ENCODE measurements at regions of chr12 and their contacts with region 1.

Region 1: DNA sequence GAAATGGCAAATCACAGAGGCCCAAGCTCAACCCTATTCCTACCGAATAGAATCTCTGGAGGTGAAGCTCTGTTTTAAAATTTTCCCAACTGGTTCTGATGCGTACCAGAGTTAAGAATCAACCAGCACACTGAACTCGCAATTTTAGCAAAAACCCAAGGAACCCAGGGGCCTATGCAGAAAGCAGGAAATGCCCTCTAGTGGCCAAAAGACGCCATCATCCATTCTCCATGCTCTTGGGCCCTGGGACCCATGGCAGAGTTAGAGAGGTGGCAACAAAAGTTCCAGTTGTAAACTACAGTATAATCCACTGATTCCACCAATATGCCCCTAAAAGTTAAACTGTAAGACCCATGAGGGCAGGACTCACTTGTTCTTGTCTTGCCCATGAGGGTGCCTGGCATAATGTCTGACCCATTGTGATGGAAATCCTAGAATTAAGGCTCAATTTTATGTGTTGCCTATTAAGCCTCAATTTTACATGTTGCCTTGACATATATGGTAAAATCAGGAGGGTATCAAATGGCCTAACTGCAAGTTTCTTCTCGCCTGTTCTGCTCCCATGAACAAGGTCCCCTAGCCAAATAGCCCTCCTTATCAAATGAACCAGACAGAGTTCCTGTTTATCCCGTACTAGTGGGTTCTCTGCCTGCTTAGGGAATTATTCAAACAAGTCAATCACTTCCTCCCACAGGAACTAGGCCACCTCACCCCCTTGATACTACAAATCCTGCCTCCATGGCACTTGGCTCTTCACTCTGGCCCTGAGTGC is 137.5 kb upstream of the CPM start:
- DNase-seq: peak; percentile 79
- H3K4me3 ChIP-seq: no peak overlapping the region
- H3K27ac ChIP-seq: no peak overlapping the region
- H3K4me1 ChIP-seq: no peaks in the 10 kb centered on the region
- CTCF ChIP-seq: peak; percentile 99

Region 2: GRCh38 chr12:68864604-68865003 is 205.9 kb before region 1 on chr12:
- CTCF ChIA-PET with region 1: interaction called, 5 read pairs
- POLR2A ChIA-PET with region 1: interaction called, 5 read pairs
- intact Hi-C with region 1: loop called (anchors 1 kb)
- DNase-seq: no peak
- H3K4me3 ChIP-seq: no peak overlapping the region
- H3K27ac ChIP-seq: no peak overlapping the region
- H3K4me1 ChIP-seq: peaks cover 8% of the 10 kb centered on the region
- CTCF ChIP-seq: no peak

Region 3: GRCh38 chr12:68871921-68872320 is 198.6 kb before region 1 on chr12:
- CTCF ChIA-PET with region 1: interaction called, 5 read pairs
- POLR2A ChIA-PET with region 1: interaction called, 5 read pairs
- intact Hi-C with region 1: loop called (anchors 1 kb)
- DNase-seq: peak; percentile 67
- H3K4me3 ChIP-seq: no peak overlapping the region
- H3K27ac ChIP-seq: no peak overlapping the region
- H3K4me1 ChIP-seq: peaks cover 23% of the 10 kb centered on the region
- CTCF ChIP-seq: peak; percentile 84

Region 4: GRCh38 chr12:68932961-68933893 is 137.3 kb before region 1 on chr12 and contains the start of gene CPM:
- CTCF ChIA-PET with region 1: no interaction called
- POLR2A ChIA-PET with region 1: no interaction called
- intact Hi-C with region 1: loop called (anchors 5 kb)
- DNase-seq: peak; percentile 58
- H3K4me3 ChIP-seq: peak within 1 kb of the TSS; percentile 72
- H3K27ac ChIP-seq: peak within 1 kb of the TSS; percentile 7
- H3K4me1 ChIP-seq: peaks cover 28% of the 10 kb centered on the region
- CTCF ChIP-seq: no peak
- total RNA-seq, gene CPM: 3.8 and 4.8 TPM in 2 replicates

Measured in OCI-LY7 (cell line).